KBM-7 (cell line): ENCODE measurements at regions of chr20 and their contacts with region 1.

Region 1: DNA sequence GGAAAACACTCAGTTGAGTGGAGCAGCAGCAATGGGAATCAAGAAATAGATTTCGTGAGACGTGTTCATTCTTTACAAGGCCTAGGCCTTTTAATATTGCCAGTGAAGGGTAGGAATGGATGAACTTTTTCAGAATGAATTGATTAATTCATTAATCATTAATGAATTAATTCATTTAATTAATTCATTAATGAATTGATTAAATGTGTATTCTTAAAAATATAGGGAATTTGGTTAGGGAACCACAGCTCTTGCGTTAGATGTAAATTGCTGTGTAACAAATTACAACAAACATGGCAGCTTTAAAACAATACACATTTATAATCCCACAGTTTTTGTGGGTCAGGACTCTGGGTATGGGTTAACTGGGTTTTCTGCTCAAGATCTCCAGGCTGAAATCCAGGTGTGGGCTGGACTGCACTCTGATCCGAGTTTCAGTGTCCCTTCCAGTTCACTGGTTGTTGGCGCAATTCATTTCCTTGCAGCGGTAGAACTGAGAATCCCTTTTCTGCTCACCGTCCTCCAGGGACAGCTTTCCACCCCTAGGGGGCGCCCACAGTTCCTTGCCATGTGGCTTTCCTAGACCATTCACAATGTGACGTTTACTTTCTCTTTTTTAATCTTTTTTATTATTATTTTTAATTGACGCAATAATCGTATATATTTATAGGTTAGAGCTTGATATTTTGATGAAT is 32.8 kb upstream of the BCAS1 start:
- DNase-seq: peak; percentile 70

Region 2: DNA sequence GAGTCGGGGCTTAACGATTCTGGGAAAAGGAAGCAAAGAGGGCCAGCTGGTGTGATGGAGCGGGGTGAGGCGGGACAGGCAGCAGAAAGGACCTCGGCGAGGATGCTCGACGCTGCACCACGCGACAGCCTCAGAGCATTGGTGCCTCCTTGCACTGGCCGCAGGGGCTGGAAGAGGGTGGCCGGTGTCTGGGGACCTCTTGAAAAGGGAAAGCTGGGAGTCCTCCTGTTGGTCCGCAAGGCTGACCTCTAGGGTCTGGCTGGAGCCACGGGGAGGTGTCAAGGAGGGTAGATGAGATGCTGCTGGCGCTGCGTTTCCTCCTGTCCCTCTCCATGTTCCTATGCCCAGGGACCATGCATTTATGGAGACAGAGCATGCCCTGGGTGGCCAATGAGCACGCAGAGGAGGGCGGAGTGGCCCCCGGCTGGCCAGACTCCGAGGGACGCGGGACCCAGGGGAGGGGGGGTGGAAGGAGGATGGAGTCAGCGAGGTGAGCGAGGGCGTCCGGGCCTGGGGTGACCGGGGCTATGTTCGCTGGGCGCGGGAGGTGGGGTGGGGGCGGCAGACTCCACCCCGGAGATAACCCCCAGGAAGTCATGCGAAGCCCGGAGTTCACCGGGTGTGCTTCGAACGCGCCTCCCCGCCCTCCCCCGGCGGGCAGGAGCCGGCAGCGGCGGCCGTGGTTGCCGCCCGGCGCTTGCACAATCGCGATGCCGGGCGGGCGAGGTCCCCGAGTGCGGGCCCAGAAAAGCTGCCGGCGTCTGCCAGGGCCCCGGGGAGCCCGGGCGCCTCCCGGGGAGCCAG is 70.6 kb after region 1 on chr20 and contains the start of gene CYP24A1:
- in situ Hi-C with region 1: no loop called
- DNase-seq: no peak

Region 3: DNA sequence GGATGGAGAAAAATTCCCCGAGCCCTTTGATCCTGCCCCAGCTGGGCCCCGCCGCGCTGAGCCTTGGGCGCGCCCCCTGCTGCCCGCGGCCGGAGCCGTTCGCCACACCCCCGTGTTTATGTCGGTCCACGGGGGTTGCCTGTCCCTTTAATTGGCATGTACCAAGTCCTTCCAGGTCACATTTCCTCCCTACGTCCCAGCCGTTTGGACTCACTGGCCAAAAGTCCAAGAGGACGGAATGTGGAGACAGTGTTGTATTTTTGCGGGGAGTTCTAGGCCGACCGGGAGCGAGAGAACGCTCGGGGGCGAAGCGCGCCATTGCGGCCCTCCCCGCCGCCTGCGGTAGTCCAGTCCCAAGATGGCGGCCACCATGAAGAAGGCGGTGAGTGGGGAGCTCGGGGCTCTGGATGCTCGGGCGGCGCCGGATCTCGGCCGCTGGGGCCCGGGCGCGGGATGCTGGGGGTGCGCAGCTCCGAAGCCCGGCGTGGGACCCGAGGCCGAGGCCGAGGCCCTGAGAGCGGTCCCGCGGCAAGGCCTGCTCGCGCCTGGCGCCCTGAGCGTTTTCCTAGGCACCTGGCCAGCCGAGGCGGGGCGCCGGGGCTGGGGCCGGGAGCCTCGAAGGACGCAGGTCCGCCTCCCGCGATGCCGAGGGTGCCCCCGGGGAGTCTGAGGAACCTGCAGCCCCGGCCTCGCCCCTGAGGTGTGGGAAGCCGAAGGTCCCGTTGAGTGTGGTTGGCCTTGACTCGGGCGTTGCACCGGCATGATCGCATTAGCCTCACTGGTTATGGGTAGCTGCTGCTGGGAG is 104.7 kb after region 1 on chr20 and contains the start of gene PFDN4:
- in situ Hi-C with region 1: loop called (anchors 10 kb)
- DNase-seq: peak; percentile 90

Region 4: DNA sequence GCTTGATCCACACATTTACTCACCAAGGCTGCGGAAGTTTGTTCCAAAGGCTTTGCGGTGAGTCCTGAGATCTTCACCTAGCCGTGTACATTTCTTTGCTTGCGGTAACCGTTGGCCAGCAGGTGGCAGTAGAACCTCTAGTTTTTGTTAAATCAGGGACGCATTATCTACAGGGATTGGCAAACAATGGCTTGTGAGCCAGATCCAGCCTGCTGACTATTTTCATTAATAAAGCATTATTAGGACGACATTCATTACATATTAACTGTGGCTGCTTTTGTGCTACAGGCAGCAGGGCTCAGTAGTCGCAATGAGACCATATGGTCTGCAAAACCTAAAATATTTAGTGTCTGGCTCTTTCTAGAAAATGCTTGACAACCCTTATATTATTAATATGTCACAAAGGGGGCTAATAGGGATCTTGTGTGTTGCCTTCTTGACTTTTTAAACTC is 546.3 kb after region 1 on chr20:
- in situ Hi-C with region 1: loop called (anchors 25 kb)
- DNase-seq: peak; percentile 63